Heart left ventricle (tissue), 16 donors: ENCODE measurements at regions of chr7 and their contacts with region 1.

Region 1: GRCh38 chr7:135389971-135390370 is 119.9 kb downstream of the CNOT4 start:
- DNase-seq: no peak
- ATAC-seq: no peak
- H3K4me3 ChIP-seq: no peak overlapping the region
- H3K27ac ChIP-seq: no peak overlapping the region
- H3K4me1 ChIP-seq: peaks cover 0 to 28% (median 12%) of the 10 kb centered on the region in 12 donors
- H3K27me3 ChIP-seq: no peaks in the 10 kb centered on the region
- CTCF ChIP-seq: no peak
- POLR2A ChIP-seq: no peak

Region 2: DNA sequence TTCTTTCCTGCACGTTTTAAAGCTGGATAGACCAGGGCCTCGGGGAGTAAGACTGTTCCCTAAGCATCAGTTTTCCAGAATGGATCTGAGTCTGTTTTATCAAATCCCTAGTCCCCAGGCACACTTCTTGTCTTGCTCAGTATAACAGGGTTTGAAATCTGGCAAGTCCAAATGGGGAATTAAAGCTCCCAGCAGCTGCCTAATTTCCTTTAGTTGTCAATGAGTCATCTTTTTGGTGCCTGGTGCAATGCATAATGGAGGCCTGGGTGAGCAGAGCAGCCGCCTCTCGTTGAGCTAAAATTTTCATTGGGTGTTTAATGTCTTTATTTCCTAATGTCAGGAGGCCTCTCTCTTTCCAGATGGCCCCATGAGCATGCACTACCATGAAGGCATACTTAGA is 68.4 kb before region 1 on chr7:
- intact Hi-C with region 1: no loop called
- DNase-seq: no peak
- ATAC-seq: peak in 3 of 4 donors; percentile 50 to 81 (median 69)
- H3K4me3 ChIP-seq: no peak overlapping the region
- H3K27ac ChIP-seq: no peak overlapping the region
- H3K4me1 ChIP-seq: peaks cover 0 to 21% (median 8%) of the 10 kb centered on the region in 12 donors
- H3K27me3 ChIP-seq: no peaks in the 10 kb centered on the region
- CTCF ChIP-seq: no peak
- POLR2A ChIP-seq: no peak

Region 3: DNA sequence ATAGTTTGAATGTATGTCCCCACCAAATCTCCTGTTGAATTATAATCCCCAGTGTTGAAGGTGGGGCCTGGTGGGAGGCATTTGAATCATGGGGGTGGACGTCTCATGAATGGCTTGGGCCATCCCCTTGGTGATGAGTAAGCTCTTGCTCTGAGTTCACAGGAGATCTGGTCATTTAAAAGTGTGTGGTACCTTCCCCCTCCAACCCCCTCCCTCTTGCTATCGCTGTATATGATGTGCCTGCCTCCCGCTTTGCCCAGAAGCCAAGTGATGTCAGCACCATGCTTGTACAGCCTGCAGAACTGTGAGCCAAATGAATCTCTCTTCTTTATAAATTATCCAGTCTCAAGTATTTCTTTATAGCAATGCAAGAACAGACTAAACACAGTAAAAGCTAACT is 16.9 kb after region 1 on chr7:
- intact Hi-C with region 1: loop called in 1 of 10 experiments (anchors 2 kb)
- DNase-seq: no peak
- ATAC-seq: no peak
- H3K4me3 ChIP-seq: no peak overlapping the region
- H3K27ac ChIP-seq: no peak overlapping the region
- H3K4me1 ChIP-seq: no peaks in the 10 kb centered on the region
- H3K27me3 ChIP-seq: no peaks in the 10 kb centered on the region
- CTCF ChIP-seq: no peak
- POLR2A ChIP-seq: no peak